ENCODE measurements at regions of chr3 and their contacts with region 1.

Region 1: GRCh38 chr3:32143849-32144757 is 37.7 kb downstream of the GPD1L start:
- DNase-seq: peak; percentile 36
- H3K4me3 Mint-ChIP-seq: no peak overlapping the region
- H3K27ac Mint-ChIP-seq: no peak overlapping the region
- H3K4me1 Mint-ChIP-seq: peaks cover 22% of the 10 kb centered on the region
- H3K27me3 Mint-ChIP-seq: no peaks in the 10 kb centered on the region

Region 2: GRCh38 chr3:30768703-30769685 is 1375.1 kb before region 1 on chr3:
- intact Hi-C with region 1: loop called (anchors 5 kb)
- DNase-seq: peak; percentile 59
- H3K4me3 Mint-ChIP-seq: no peak overlapping the region
- H3K27ac Mint-ChIP-seq: no peak overlapping the region
- H3K4me1 Mint-ChIP-seq: peaks cover 14% of the 10 kb centered on the region
- H3K27me3 Mint-ChIP-seq: peaks cover 20% of the 10 kb centered on the region

Region 3: DNA sequence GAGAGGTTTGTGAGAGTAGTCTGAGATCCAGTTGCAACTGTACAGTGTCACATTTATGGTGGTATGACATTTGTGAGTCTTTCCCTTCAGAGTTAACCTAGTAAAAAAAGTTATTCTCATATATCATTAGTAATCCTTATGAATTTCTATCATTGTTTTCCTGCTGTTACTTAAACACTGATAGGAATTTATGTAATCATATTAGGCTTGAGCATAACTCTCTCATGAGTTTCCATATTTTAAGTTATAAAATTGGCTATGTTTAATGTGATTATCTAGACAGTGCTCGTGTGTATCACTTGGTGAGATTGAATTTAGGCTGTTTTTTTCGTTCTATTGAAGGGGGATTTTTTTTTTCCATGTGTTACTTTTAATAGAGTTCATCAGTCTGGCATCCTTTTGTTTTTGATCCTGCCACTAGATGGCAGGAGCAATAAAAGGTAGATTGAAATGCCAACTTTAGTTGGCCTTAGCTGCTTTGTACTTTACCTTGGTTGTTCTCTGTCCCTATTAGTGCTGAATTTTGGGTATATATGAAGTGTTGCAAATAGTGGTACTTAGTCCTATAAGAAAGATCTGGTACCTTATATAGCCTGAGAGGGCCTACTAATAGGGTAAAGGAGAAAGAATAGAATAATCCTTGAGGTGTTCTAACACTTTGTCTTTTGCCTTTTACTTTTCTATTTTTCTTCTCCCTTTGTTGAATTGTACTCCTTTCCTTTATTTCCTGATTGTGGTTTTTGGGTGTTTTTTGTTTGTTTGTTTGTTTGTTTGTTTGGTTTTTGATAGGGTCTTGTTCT is 593.5 kb before region 1 on chr3:
- intact Hi-C with region 1: loop called (anchors 10 kb)
- DNase-seq: no peak
- H3K4me3 Mint-ChIP-seq: no peak overlapping the region
- H3K27ac Mint-ChIP-seq: no peak overlapping the region
- H3K4me1 Mint-ChIP-seq: peaks cover 75% of the 10 kb centered on the region
- H3K27me3 Mint-ChIP-seq: no peaks in the 10 kb centered on the region

Region 4: DNA sequence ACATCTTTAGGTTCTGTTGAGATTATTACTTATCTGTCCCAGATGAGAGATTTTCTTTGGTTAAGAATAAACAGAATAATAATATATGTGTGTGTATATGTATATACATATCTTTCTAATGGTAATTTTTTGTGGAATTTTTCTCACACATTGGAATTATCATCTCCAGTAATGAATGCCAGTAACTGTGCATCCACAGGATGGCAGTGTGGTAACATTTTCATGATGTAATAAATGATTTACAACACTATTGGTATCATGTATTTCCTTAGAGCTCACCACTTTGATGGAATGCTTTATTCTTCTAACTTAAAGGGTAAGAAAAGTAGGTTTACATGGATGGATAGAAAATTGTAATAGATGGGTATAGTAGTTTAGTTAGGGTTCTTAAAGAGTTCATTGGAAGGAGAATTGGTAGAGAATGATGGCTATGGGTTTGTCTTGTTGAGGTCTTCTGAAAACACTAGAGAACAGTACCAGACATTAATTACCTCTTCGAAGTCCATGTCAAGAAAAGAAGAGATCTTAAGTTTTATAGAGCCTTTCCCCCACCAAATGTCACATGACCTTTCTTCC is 533.3 kb before region 1 on chr3:
- intact Hi-C with region 1: loop called (anchors 10 kb)
- DNase-seq: no peak
- H3K4me3 Mint-ChIP-seq: no peak overlapping the region
- H3K27ac Mint-ChIP-seq: no peak overlapping the region
- H3K4me1 Mint-ChIP-seq: peaks cover 71% of the 10 kb centered on the region
- H3K27me3 Mint-ChIP-seq: no peaks in the 10 kb centered on the region

Region 5: DNA sequence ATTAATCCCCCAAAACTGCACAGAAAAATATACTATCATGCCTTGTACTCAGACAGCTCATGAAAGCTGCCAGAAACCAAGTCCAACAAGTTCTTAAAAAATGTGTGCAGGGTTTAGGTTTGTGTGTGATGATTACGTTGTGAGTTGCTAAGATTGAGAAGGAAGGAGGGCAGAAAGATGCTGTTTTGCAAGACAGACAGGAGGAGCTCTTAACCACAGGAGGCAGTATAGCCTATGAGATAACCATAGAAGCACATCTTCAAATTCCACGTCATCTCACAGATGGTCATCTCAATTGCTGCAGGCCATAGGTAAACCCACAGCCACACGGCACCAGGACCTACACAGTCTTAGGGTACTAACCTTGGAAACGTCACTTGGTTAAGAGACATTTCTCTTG is 419.4 kb before region 1 on chr3:
- intact Hi-C with region 1: loop called (anchors 10 kb)
- DNase-seq: no peak
- H3K4me3 Mint-ChIP-seq: no peak overlapping the region
- H3K27ac Mint-ChIP-seq: no peak overlapping the region
- H3K4me1 Mint-ChIP-seq: no peaks in the 10 kb centered on the region
- H3K27me3 Mint-ChIP-seq: no peaks in the 10 kb centered on the region

Region 6: DNA sequence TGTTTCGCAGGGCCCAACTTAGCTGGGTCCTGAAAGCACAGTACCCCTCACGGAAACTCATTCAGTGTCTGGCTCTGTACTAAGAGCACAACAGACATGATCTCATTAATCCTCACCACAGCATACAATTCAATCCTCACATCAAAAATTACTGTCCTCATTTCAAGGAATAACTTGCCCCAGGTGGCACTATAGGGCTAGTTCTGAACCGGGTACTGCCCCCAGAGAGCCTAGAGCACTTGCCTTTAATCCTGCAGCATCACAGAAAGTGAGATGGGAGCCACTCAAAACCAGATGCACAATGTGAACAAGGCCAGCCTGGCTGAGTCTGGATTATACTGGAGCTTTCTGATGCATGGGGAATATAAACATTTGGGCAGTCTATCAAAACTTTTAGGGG is 285.7 kb before region 1 on chr3:
- intact Hi-C with region 1: loop called (anchors 1 kb)
- DNase-seq: no peak
- H3K4me3 Mint-ChIP-seq: no peak overlapping the region
- H3K27ac Mint-ChIP-seq: no peak overlapping the region
- H3K4me1 Mint-ChIP-seq: no peaks in the 10 kb centered on the region
- H3K27me3 Mint-ChIP-seq: peaks cover 2% of the 10 kb centered on the region

Region 7: GRCh38 chr3:32018757-32019564 is 125.1 kb before region 1 on chr3:
- intact Hi-C with region 1: loop called (anchors 1 kb)
- DNase-seq: no peak
- H3K4me3 Mint-ChIP-seq: no peak overlapping the region
- H3K27ac Mint-ChIP-seq: no peak overlapping the region
- H3K4me1 Mint-ChIP-seq: no peaks in the 10 kb centered on the region
- H3K27me3 Mint-ChIP-seq: peaks cover 8% of the 10 kb centered on the region

Region 8: DNA sequence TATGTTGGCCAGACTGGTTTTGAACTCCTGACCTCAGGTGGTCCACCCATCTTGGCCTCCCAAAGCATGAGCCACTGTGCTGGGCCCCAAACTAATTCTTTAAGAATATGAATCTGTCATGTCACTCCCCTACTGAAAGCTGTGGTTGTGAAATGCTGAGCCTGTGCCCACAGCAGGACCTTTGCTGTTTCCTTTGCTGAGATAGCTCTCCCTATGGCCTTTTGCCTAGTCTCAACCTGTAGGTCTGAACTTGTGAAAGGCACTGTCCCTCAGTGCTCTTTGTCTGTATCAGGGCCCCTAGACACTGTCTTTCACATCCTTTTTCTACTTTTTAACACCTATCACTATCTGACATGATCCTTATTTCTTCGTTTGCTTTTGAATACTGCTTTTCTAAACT is 744.6 kb after region 1 on chr3:
- intact Hi-C with region 1: no loop called
- DNase-seq: no peak
- H3K4me3 Mint-ChIP-seq: no peak overlapping the region
- H3K27ac Mint-ChIP-seq: no peak overlapping the region
- H3K4me1 Mint-ChIP-seq: peaks cover 9% of the 10 kb centered on the region
- H3K27me3 Mint-ChIP-seq: peaks cover 48% of the 10 kb centered on the region

Measured in activated T-helper 1 cell treated with anti-CD3 and anti-CD28 coated beads, Interleukin-12 subunit alpha, Interleukin-12 subunit beta, Interleukin-2, Interleukin-4 antibody, amounts not matched to agents 30 ng/mL and 10 ng/mL and 1 ng/mL, durations not matched to agents 14 hours and 24 hours and 36 hours (primary cell).